Astrocyte of the cerebellum (primary cell): ENCODE measurements at regions of chrX and their contacts with region 1.

Region 1: DNA sequence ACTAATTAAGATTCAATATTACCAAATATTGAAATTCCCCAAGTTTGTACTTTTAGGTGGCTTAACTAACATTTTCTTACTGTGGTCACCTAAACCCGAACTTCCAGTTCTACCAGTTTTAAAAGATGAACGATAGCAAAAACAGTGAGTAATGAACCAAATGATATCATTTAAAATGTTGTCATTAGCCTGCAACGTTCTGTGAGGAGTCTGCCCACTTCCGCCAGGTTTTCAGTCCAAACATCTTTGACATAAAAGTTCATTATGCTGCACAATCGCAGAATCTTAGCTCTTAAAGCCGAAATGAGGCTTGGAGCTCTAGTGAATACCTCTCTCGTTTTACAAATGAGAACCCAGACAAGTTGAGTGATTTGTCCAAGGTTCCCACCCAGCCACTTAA is 774 bp downstream of the PIGA start:
- DNase-seq: no peak
- H3K4me3 ChIP-seq: peak overlapping the region; percentile 76
- CTCF ChIP-seq: no peak

Region 2: DNA sequence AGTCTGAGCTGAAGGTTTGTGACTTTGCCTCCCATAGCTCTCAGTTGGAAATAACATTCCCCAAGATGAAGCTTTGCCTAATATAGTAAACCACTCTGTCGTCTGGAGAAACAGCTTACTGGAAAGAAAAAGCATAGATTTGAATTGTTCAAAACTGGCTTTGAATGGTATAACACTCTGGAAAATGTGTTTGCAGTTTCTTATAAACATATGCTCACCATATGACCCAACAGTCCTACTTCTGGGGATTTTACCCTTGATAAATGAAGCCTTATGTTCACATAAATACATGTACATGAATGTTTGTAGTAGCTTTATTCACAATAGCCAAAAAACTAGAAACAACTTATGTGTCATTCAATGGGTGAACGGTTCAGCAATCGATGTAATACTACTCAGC is 39.4 kb after region 1 on chrX:
- in situ Hi-C with region 1: loop called (anchors 5 kb)
- DNase-seq: no peak
- H3K4me3 ChIP-seq: no peak overlapping the region
- CTCF ChIP-seq: no peak